ENCODE measurements at regions of chr5 and their contacts with region 1.

Region 1: GRCh38 chr5:119435436-119436132 is 16.7 kb upstream of the HSD17B4 start:
- DNase-seq: peak; percentile 89
- ATAC-seq: peak; percentile 92
- H3K4me3 ChIP-seq: peak overlapping the region in 1 of 5 experiments; percentile 5
- H3K4me3 Mint-ChIP-seq: peak overlapping the region; percentile 46
- H3K27ac ChIP-seq: no peak overlapping the region
- H3K27ac Mint-ChIP-seq: peak overlapping the region; percentile 5
- H3K4me1 ChIP-seq: peaks cover 14 to 20% of the 10 kb centered on the region in 2 donors
- H3K4me1 Mint-ChIP-seq: peaks cover 28% of the 10 kb centered on the region
- H3K27me3 ChIP-seq: no peaks in the 10 kb centered on the region
- H3K27me3 Mint-ChIP-seq: no peaks in the 10 kb centered on the region
- CTCF ChIP-seq: peak; percentile 82

Region 2: DNA sequence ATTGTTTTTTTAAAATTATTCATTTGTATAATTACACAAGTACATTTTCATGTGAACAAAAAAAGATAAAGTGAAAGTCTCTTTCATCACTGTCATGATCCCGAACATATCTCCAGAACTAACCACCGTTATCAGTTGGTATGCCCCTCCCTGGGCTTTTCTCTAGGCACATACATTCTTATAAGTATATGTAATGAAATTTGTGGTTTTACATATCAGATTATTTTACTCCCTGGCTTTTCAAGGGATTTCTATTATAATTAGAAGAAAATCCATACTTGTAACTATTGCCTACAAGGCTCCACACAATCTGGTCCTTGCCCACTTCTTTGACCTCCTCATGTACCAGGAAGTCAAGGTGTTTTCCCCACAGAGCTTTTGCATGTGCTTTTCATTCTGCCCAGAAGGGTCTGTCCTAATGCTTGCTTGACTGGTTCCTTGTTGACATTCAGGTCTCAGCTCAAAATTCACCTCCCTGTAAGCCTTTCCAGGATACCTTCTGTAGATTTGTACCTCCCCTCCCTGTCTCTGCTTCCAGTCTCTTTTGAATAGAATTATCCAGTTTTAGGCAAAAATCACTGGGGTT is 17.0 kb before region 1 on chr5:
- CTCF ChIA-PET with region 1: interaction called, 65 read pairs
- POLR2A ChIA-PET with region 1: no interaction called
- intact Hi-C with region 1: loop called (anchors 1 kb)
- DNase-seq: peak; percentile 59
- ATAC-seq: peak; percentile 44
- H3K4me3 ChIP-seq: peak overlapping the region in 2 of 5 experiments; percentile 3 to 16
- H3K4me3 Mint-ChIP-seq: peak overlapping the region; percentile 65
- H3K27ac ChIP-seq: peak overlapping the region; percentile 82 to 83
- H3K27ac Mint-ChIP-seq: peak overlapping the region; percentile 91
- H3K4me1 ChIP-seq: peaks cover 60 to 62% of the 10 kb centered on the region in 2 donors
- H3K4me1 Mint-ChIP-seq: peaks cover 72% of the 10 kb centered on the region
- H3K27me3 ChIP-seq: no peaks in the 10 kb centered on the region
- H3K27me3 Mint-ChIP-seq: no peaks in the 10 kb centered on the region
- CTCF ChIP-seq: no peak

Region 3: GRCh38 chr5:119452373-119453039 is 16.9 kb after region 1 on chr5 and contains the start of gene HSD17B4:
- CTCF ChIA-PET with region 1: interaction called, 10 read pairs
- POLR2A ChIA-PET with region 1: no interaction called
- intact Hi-C with region 1: no loop called
- DNase-seq: peak; percentile 92
- ATAC-seq: peak; percentile 93
- H3K4me3 ChIP-seq: peak within 1 kb of the TSS; percentile 69 to 89 (median 77)
- H3K4me3 Mint-ChIP-seq: peak within 1 kb of the TSS; percentile 96
- H3K27ac ChIP-seq: peak within 1 kb of the TSS; percentile 86 to 87
- H3K27ac Mint-ChIP-seq: peak within 1 kb of the TSS; percentile 97
- H3K4me1 ChIP-seq: peaks cover 32% of the 10 kb centered on the region in 2 donors
- H3K4me1 Mint-ChIP-seq: peaks cover 53% of the 10 kb centered on the region
- H3K27me3 ChIP-seq: no peaks in the 10 kb centered on the region
- H3K27me3 Mint-ChIP-seq: no peaks in the 10 kb centered on the region
- CTCF ChIP-seq: no peak
- total RNA-seq, gene HSD17B4: 112 and 114 TPM in 2 replicates

Region 4: DNA sequence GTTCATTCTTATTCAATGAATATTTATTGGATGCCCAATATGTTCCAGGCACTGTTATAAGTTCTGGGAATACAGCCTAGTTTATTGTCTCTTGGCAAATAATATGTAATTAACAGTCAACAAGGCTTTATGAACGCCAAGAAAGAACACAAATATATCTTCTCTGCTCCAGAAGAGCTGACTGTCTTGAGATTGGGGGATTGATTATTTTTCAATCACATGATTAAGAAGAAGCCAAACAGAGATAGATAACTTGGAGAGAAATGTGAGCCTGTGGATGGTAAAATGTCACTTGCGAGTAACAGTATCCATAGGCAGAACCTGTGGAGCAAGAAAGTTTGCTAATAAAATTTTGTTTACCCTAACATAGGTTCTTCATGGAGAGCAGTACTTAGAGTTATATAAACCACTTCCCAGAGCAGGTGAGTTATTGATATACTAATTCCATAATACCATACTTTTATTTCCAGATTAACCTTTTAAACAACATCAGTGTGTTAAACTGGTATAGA is 66.1 kb after region 1 on chr5:
- CTCF ChIA-PET with region 1: no interaction called
- POLR2A ChIA-PET with region 1: no interaction called
- intact Hi-C with region 1: no loop called
- DNase-seq: no peak
- ATAC-seq: no peak
- H3K4me3 ChIP-seq: no peak overlapping the region
- H3K4me3 Mint-ChIP-seq: no peak overlapping the region
- H3K27ac ChIP-seq: no peak overlapping the region
- H3K27ac Mint-ChIP-seq: no peak overlapping the region
- H3K4me1 ChIP-seq: no peaks in the 10 kb centered on the region
- H3K4me1 Mint-ChIP-seq: no peaks in the 10 kb centered on the region
- H3K27me3 ChIP-seq: no peaks in the 10 kb centered on the region
- H3K27me3 Mint-ChIP-seq: no peaks in the 10 kb centered on the region
- CTCF ChIP-seq: no peak

Measured in B cell (primary cell).